ENCODE measurements at regions of chr9 and their contacts with region 1.

Region 1: GRCh38 chr9:2837915-2838314 is 6.0 kb downstream of the PUM3 start:
- DNase-seq: no peak
- H3K4me3 ChIP-seq: peak overlapping the region; percentile 22 to 45
- H3K27ac ChIP-seq: peak overlapping the region in 1 of 2 donors; percentile 43
- H3K4me1 ChIP-seq: peaks cover 2 to 38% of the 10 kb centered on the region in 2 donors
- H3K27me3 ChIP-seq: no peaks in the 10 kb centered on the region
- CTCF ChIP-seq: peak; percentile 20 to 59 (median 49)

Region 2: GRCh38 chr9:2125906-2126305 is 712.0 kb before region 1 on chr9:
- intact Hi-C with region 1: loop called (anchors 5 kb)
- DNase-seq: no peak
- H3K4me3 ChIP-seq: peak overlapping the region; percentile 36 to 37
- H3K27ac ChIP-seq: peak overlapping the region; percentile 85 to 89
- H3K4me1 ChIP-seq: peaks cover 7 to 73% of the 10 kb centered on the region in 2 donors
- H3K27me3 ChIP-seq: no peaks in the 10 kb centered on the region
- CTCF ChIP-seq: no peak

Region 3: DNA sequence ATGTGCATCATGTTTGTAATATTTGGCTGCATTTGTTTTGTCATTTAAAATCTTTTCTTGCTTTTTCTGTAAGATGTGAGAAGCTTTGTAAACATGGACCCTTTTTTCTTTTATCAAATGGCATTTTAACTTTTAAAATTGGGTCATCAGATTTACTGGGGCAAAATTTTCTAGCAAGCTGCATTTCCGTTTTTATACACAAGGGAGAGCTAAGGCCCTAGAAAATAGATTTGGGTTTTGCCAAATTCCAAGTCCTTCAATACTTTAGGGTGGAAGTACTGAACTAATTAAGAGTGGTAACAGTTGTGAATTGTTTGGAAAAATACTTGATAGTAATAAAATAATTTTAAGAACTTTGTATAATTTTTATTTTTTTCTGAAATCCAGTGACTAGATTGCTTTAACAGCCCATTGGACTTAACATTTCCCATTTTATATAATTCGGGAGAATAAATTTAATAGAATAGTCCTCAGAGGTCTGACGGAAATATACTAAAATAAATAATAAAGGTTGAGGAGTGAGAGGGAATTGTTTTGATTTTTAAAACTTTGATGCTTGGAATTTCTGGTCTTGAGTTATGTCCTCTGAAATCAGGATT is 705.3 kb before region 1 on chr9:
- intact Hi-C with region 1: loop called (anchors 5 kb)
- DNase-seq: no peak
- H3K4me3 ChIP-seq: no peak overlapping the region
- H3K27ac ChIP-seq: no peak overlapping the region
- H3K4me1 ChIP-seq: peaks cover 0 to 30% of the 10 kb centered on the region in 2 donors
- H3K27me3 ChIP-seq: no peaks in the 10 kb centered on the region
- CTCF ChIP-seq: peak; percentile 41 to 81 (median 69)

Region 4: DNA sequence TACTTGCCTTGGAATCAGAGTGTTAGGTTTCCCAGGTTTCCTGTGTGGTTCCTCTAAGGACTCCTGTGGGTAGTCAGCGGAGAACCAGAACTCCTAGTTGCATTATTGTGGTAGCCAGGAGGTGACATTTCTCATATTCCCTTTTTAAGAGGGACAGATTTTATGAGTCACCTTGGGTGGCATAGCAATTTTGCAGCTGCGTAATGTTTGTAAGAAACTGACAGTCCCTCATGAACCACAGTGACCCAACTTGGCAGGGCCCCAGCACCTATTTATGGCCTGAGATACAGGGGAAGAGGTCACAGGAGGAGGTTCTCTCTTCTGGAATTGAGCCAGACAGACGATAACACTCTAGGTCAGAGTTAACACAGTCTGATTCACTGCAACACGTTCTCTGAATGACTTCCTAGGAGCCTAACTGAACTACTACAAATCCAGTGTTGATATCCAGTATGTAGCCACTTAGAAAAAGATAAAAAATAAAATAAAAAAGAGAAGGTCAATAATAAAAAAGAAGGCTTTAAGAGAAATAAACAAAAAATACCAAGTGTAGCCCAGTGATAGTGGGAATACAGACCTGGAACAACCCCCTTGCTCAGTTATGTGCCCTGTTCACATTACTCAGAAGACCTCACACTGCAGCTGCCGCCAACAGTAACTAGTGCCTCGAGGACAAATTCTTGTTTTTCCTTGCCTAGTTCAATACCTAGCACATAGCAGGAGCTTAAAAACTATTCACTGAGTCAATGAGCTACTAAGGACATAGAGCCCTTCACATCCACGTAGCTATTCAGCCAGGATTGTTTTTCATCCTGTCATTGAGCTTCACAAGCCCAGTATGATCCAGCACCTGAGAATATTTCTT is 267.1 kb before region 1 on chr9:
- intact Hi-C with region 1: loop called (anchors 5 kb)
- DNase-seq: peak; percentile 37 to 89
- H3K4me3 ChIP-seq: no peak overlapping the region
- H3K27ac ChIP-seq: peak overlapping the region; percentile 36 to 51
- H3K4me1 ChIP-seq: peaks cover 0 to 7% of the 10 kb centered on the region in 2 donors
- H3K27me3 ChIP-seq: no peaks in the 10 kb centered on the region
- CTCF ChIP-seq: no peak

Region 5: DNA sequence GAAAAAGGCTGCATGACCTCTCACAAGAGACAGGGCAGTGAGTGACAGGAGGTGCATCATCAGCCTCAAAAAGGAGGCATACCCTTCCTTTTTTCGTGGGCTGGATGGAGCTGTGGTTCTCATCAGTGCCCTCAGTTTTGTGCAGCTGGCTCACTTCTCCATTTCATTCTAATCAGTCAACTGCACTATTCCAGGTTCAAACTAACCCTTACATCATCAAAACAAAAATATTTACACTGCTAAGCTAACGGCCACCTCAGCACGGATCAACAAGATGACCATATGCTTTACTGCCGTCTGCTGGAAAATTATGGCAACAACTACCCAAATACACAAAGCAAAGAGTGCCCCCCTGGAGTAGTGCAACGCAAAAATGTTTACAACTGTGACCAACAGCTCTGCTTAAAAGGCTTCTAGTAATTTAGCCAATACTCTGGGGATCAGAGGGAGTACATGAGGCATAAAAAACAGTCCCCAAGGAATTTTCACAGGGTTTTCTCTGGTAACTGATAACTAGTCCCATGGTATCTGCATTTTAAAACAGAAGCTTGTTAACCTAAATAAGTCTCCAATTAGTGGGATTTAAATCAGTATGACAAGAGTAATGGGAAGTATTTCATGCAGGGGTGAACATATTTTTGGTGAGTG is 109.8 kb before region 1 on chr9:
- intact Hi-C with region 1: loop called (anchors 5 kb)
- DNase-seq: no peak
- H3K4me3 ChIP-seq: no peak overlapping the region
- H3K27ac ChIP-seq: no peak overlapping the region
- H3K4me1 ChIP-seq: peaks cover 0 to 6% of the 10 kb centered on the region in 2 donors
- H3K27me3 ChIP-seq: no peaks in the 10 kb centered on the region
- CTCF ChIP-seq: peak; percentile 20 to 51 (median 35)

Region 6: GRCh38 chr9:2809691-2810433 is 28.1 kb before region 1 on chr9:
- intact Hi-C with region 1: loop called (anchors 5 kb)
- DNase-seq: peak in 1 of 2 donors; percentile 67
- H3K4me3 ChIP-seq: peak overlapping the region in 1 of 2 donors; percentile 8
- H3K27ac ChIP-seq: peak overlapping the region; percentile 77 to 83
- H3K4me1 ChIP-seq: peaks cover 6 to 18% of the 10 kb centered on the region in 2 donors
- H3K27me3 ChIP-seq: no peaks in the 10 kb centered on the region
- CTCF ChIP-seq: no peak